Activated T-helper 1 cell treated with anti-CD3 and anti-CD28 coated beads, Interleukin-12 subunit alpha, Interleukin-12 subunit beta, Interleukin-2, Interleukin-4 antibody, amounts not matched to agents 30 ng/mL and 10 ng/mL and 1 ng/mL, durations not matched to agents 14 hours and 24 hours and 36 hours (primary cell): ENCODE measurements at regions of chr4 and their contacts with region 1.

Region 1: DNA sequence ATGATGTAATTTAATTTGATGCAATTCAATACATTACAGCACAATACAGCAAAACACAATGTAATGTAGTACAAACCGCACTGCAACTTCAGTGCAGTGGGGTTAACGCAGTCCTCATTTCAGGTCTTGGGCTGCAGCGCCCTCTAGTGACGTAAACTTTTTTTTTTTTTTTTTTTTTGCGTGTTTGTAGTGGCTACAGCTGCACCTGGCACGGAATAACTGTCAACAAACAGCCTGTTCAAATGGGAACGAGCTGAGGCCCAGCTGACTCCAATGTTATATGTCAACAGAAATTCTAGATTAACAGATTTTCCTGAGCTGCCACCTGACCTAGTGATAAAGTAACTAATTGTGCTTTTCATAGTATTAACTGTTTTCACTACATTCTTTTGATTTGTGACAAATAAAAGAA is 33.5 kb upstream of the RASSF6 start:
- DNase-seq: no peak
- H3K4me3 Mint-ChIP-seq: no peak overlapping the region
- H3K27ac Mint-ChIP-seq: no peak overlapping the region
- H3K4me1 Mint-ChIP-seq: no peaks in the 10 kb centered on the region
- H3K27me3 Mint-ChIP-seq: peaks cover 10% of the 10 kb centered on the region

Region 2: GRCh38 chr4:72326692-72327632 is 1326.7 kb before region 1 on chr4:
- intact Hi-C with region 1: loop called (anchors 10 kb)
- DNase-seq: no peak
- H3K4me3 Mint-ChIP-seq: no peak overlapping the region
- H3K27ac Mint-ChIP-seq: no peak overlapping the region
- H3K4me1 Mint-ChIP-seq: no peaks in the 10 kb centered on the region
- H3K27me3 Mint-ChIP-seq: peaks cover 6% of the 10 kb centered on the region

Region 3: DNA sequence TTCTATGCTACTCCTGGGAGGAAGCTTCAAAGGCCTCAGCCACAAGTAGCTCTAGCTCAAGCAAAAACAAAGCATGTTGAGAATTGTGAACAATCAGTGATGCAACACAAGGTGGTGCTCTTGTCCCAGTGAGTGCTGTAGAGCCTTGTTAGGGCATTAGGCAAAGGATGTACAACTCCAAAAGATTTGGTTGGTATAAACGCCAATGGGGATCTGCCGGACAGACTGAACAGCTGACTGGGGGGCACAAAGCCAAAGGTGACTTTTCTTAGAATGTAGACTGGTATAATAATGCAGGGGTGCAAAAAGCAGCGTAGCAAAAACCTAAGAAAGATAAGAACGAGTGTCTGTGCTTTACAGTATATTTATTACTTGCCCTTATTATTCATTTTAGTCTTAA is 312.2 kb before region 1 on chr4:
- intact Hi-C with region 1: loop called (anchors 1 kb)
- DNase-seq: no peak
- H3K4me3 Mint-ChIP-seq: no peak overlapping the region
- H3K27ac Mint-ChIP-seq: no peak overlapping the region
- H3K4me1 Mint-ChIP-seq: no peaks in the 10 kb centered on the region
- H3K27me3 Mint-ChIP-seq: peaks cover 5% of the 10 kb centered on the region

Region 4: DNA sequence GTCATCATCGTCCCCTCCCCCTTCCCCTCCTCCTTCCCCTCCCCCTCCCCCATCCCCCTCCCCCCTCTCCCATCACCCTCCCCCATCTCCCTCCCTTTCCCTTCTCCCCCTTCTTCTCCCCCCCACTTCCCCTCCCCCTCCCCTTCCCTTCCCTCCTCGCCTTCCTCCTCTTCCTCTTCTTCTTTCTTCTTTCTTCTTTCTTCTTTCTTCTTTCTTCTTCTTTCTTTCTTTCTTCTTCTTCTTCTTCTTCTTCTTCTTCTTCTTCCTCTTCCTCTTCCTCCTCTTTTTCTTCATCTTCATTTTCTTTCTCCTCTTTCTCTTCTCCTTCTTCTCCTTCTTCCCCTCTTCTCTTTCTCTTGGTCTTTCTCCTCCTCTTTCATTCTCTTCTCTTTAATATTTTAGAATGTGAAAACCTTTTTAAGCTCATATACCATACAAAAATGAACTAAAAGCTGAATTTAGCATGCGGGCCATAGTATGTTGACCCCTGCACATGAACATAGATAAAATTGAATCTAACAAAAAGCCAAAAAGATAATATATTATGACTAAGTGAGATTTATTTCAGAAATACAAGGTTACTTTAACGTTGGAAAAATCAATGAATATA is 192.7 kb before region 1 on chr4:
- intact Hi-C with region 1: no loop called
- DNase-seq: no peak
- H3K4me3 Mint-ChIP-seq: no peak overlapping the region
- H3K27ac Mint-ChIP-seq: no peak overlapping the region
- H3K4me1 Mint-ChIP-seq: no peaks in the 10 kb centered on the region
- H3K27me3 Mint-ChIP-seq: peaks cover 7% of the 10 kb centered on the region

Region 5: DNA sequence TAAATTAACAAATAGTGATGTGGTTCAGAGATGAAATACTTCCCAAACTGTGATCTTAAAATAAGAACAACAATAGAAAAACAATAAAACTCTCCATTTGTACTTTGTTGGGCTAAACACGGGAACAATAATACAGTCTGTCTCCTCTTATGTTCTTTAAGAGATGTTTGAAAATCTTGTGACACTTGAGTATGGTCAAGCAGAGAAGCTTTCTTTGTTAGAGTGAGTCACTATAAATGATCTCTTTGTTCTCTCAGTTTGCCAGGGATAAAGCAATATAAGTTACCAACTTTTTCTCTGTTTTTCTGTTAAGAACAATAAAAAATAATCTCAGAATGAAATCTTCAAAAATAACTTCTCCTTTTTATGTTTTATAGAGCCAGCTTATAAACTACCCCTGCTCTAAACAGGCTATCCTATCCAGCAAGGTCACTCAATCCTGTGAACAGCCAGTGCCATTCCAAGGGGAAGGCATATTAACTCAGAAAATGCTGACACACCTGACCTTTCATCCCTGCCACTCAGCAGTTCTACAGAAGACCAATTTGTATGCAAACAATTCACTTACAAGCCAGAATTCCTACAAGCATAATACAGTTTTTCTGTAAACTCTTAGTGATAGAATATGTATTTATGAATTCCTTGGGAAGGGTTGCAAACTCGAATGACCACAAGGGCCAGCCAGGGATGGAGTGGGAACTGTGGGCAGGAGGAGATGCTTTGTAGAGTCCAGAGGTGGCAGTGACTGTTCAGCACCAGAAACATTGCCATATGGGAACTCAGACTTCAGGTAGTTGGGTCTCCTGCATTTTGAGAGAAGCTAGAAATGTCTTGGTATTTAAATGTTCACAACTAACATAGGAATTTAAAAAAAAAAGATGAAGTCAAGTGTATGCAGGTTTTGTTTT is 119.9 kb before region 1 on chr4:
- intact Hi-C with region 1: loop called (anchors 10 kb)
- DNase-seq: no peak
- H3K4me3 Mint-ChIP-seq: no peak overlapping the region
- H3K27ac Mint-ChIP-seq: no peak overlapping the region
- H3K4me1 Mint-ChIP-seq: peaks cover 13% of the 10 kb centered on the region
- H3K27me3 Mint-ChIP-seq: peaks cover 16% of the 10 kb centered on the region

Region 6: DNA sequence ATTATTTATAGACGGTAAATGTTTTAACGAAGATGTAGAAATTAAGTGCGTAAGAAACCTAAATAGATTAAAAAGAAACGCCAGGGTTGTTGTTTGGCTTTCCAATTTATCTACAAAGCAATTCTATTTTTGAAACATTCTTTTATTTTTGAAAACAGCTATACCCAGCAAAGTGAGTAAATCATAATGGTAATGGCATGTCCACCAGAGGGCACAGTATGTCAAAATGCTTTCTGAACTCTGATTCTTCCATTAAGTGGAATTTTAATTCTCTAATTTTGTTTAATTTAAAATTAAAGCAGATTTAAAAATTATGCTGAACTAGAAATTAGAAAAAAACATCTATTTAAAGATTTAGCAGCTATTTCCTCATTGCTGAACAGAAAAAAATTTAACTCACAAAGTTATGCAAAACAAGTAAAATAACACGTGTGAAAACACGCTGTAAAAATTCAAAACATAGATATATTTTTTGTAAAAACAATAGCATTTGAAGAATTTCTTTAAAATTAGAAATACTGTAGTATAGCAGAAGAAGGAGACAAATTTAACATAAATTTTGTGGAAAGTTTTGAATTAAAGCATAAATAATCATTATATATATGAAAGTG is 60.0 kb before region 1 on chr4:
- intact Hi-C with region 1: loop called (anchors 1 kb)
- DNase-seq: no peak
- H3K4me3 Mint-ChIP-seq: no peak overlapping the region
- H3K27ac Mint-ChIP-seq: no peak overlapping the region
- H3K4me1 Mint-ChIP-seq: no peaks in the 10 kb centered on the region
- H3K27me3 Mint-ChIP-seq: no peaks in the 10 kb centered on the region